WTC11 (cell line): ENCODE measurements at regions of chr10 and their contacts with region 1.

Region 1: GRCh38 chr10:60649485-60650374 is 128.5 kb upstream of the CDK1 start:
- DNase-seq: no peak
- ATAC-seq: peak; percentile 60
- H3K4me3 Mint-ChIP-seq: no peak overlapping the region
- H3K27ac Mint-ChIP-seq: peak overlapping the region; percentile 10
- H3K4me1 Mint-ChIP-seq: peaks cover 31% of the 10 kb centered on the region
- H3K27me3 Mint-ChIP-seq: no peaks in the 10 kb centered on the region
- CTCF ChIP-seq: no peak

Region 2: GRCh38 chr10:59847326-59847725 is 802.4 kb before region 1 on chr10:
- CTCF ChIA-PET with region 1: no interaction called
- POLR2A ChIA-PET with region 1: interaction called, 10 read pairs
- DNase-seq: peak; percentile 73
- ATAC-seq: peak; percentile 95
- H3K4me3 Mint-ChIP-seq: peak overlapping the region; percentile 45
- H3K27ac Mint-ChIP-seq: peak overlapping the region; percentile 85
- H3K4me1 Mint-ChIP-seq: peaks cover 56% of the 10 kb centered on the region
- H3K27me3 Mint-ChIP-seq: peaks cover 4% of the 10 kb centered on the region; the same call in 1 of the 2 replicates
- CTCF ChIP-seq: no peak

Region 3: GRCh38 chr10:60662917-60663614 is 13.3 kb after region 1 on chr10:
- CTCF ChIA-PET with region 1: interaction called, 13 read pairs
- POLR2A ChIA-PET with region 1: interaction called, 3 read pairs
- DNase-seq: no peak
- ATAC-seq: peak; percentile 42
- H3K4me3 Mint-ChIP-seq: no peak overlapping the region
- H3K27ac Mint-ChIP-seq: 0 out of 2 replicates have a peak overlapping the region, but pooled peaks have one; percentile 34
- H3K4me1 Mint-ChIP-seq: peaks cover 46% of the 10 kb centered on the region
- H3K27me3 Mint-ChIP-seq: no peaks in the 10 kb centered on the region
- CTCF ChIP-seq: no peak

Region 4: GRCh38 chr10:60704480-60704879 is 54.8 kb after region 1 on chr10:
- CTCF ChIA-PET with region 1: no interaction called
- POLR2A ChIA-PET with region 1: no interaction called
- DNase-seq: no peak
- ATAC-seq: no peak
- H3K4me3 Mint-ChIP-seq: no peak overlapping the region
- H3K27ac Mint-ChIP-seq: peak overlapping the region; percentile 48; the same call in 1 of the 2 replicates
- H3K4me1 Mint-ChIP-seq: peaks cover 12% of the 10 kb centered on the region
- H3K27me3 Mint-ChIP-seq: no peaks in the 10 kb centered on the region; the same call in 1 of the 2 replicates
- CTCF ChIP-seq: no peak

Region 5: DNA sequence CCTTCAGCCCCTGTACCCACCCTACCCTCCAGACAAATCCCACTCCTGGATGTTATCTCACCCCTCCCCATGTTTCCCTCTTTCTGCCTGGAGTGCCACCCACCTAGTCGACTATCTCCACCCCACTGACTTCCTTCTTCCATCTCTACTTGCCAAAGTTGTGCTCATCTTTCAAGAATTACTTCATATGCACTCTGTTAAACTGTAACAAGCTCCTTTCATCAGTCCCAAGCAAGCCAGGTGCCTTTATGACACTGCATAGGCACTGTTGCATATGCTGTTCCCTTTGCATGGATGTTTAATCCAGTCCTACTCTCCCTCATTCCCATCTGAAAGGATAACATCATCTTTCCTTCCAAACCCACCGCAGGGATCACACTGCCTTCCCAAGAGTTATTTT is 119.7 kb after region 1 on chr10:
- CTCF ChIA-PET with region 1: interaction called, 20 read pairs
- POLR2A ChIA-PET with region 1: no interaction called
- DNase-seq: no peak
- ATAC-seq: peak; percentile 40
- H3K4me3 Mint-ChIP-seq: no peak overlapping the region
- H3K27ac Mint-ChIP-seq: no peak overlapping the region
- H3K4me1 Mint-ChIP-seq: peaks cover 14% of the 10 kb centered on the region
- H3K27me3 Mint-ChIP-seq: no peaks in the 10 kb centered on the region
- CTCF ChIP-seq: no peak